Activated naive CD8-positive, alpha-beta T cell treated with anti-CD3 and anti-CD28 coated beads, Interleukin-2, amount 10 ng/mL, durations not matched to agents 7 days and 5 days (primary cell): ENCODE measurements at regions of chr12 and their contacts with region 1.

Region 1: GRCh38 chr12:111434680-111435338 is 29.1 kb downstream of the SH2B3 start:
- DNase-seq: peak; percentile 78
- ATAC-seq: peak; percentile 68
- H3K4me3 Mint-ChIP-seq: peak overlapping the region; percentile 80
- H3K27ac Mint-ChIP-seq: peak overlapping the region; percentile 97
- H3K4me1 Mint-ChIP-seq: peaks cover 83% of the 10 kb centered on the region
- H3K27me3 Mint-ChIP-seq: no peaks in the 10 kb centered on the region

Region 2: GRCh38 chr12:111405149-111405860 is 29.5 kb before region 1 on chr12:
- POLR2A ChIA-PET with region 1: interaction called, 150 read pairs
- DNase-seq: peak; percentile 100
- ATAC-seq: peak; percentile 78
- H3K4me3 Mint-ChIP-seq: peak overlapping the region; percentile 95
- H3K27ac Mint-ChIP-seq: peak overlapping the region; percentile 94
- H3K4me1 Mint-ChIP-seq: peaks cover 45% of the 10 kb centered on the region
- H3K27me3 Mint-ChIP-seq: no peaks in the 10 kb centered on the region

Region 3: GRCh38 chr12:111444925-111445725 is 10.3 kb after region 1 on chr12:
- POLR2A ChIA-PET with region 1: interaction called, 89 read pairs
- DNase-seq: peak; percentile 77
- ATAC-seq: peak; percentile 94
- H3K4me3 Mint-ChIP-seq: peak overlapping the region; percentile 76
- H3K27ac Mint-ChIP-seq: peak overlapping the region; percentile 91
- H3K4me1 Mint-ChIP-seq: peaks cover 70% of the 10 kb centered on the region
- H3K27me3 Mint-ChIP-seq: no peaks in the 10 kb centered on the region

Region 4: DNA sequence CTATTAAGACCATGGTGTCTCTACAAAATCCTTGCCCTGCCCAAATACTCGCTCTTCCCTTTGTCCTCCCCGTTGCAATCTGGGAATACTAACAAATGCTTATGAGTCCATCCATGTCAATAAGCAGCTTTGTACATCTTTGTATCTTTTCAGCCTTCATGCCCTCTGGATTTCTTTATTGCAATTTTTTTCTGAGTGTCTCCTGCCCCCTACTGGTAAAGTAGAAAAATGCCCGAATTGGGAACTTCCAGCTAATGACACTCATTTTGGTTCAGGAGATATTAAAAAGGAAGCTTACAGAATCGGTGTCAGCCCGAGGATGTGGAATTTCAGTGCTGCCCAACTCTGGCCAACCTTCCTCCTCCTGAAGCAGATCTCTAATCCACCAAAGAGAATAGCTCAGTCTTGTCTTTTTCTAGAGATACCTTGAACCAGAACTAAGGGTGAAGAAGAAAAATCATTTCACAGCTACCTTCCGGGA is 16.9 kb after region 1 on chr12:
- POLR2A ChIA-PET with region 1: interaction called, 49 read pairs
- DNase-seq: no peak
- ATAC-seq: peak; percentile 30
- H3K4me3 Mint-ChIP-seq: no peak overlapping the region
- H3K27ac Mint-ChIP-seq: peak overlapping the region; percentile 15
- H3K4me1 Mint-ChIP-seq: peaks cover 36% of the 10 kb centered on the region
- H3K27me3 Mint-ChIP-seq: no peaks in the 10 kb centered on the region